ENCODE measurements at regions of chr15 and their contacts with region 1.

Region 1: DNA sequence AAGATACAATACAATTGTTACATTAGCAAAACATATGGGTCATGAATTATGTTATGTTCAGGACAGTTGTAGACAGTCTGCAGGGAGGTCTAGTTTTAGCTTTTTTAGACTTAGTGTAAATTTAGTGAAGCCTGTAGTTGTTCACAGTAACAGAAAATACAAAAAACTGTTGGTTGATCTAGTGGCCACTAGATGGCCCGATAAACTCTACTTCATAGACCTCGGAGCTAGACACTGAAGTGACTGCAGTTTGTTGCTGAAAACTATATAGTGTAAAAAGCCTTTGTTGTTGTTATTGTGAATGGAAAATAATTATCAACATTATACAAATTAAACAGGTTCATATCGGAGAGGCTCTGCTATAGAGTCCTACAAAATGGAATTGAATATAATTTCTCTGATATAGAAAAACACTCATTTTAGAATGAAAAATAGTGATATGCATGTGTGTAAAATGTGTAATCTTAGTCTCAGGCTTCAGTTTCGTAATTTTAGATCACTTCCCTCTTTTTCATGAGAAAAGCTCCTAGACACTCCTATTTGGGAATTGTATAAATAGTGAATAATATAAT is 18.3 kb downstream of the MAGEL2 start:
- DNase-seq: no peak

Region 2: GRCh38 chr15:23497710-23498111 is 131.6 kb before region 1 on chr15:
- intact Hi-C with region 1: loop called (anchors 10 kb)
- DNase-seq: peak in 4 of 10 donors; percentile 14 to 58 (median 18)

Measured in posterior cingulate gyrus (tissue), 11 donors.